Activated naive CD4-positive, alpha-beta T cell treated with anti-CD3 and anti-CD28 coated beads for 36 hours (primary cell): ENCODE measurements at regions of chr1 and their contacts with region 1.

Region 1: DNA sequence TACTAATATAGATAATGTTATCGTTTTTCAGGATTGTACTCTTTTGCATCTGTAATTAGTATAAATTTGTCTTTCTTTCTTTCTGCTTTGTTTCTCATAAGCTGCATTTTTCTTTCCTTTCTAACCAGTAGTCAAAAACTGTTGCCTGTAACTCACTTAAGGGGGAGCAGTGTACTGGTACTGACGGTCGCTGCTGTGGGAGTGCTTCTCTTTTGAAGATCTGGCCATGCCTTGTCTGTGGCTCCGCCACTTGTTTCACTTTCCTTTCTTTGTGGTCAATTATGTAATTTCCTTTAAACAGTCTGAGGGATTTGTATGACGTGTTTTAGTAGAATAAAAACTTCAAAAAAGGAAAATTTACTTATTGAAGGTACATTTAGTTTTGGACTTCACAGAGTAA is 37.0 kb downstream of the MIA3 start:
- DNase-seq: peak; percentile 81
- H3K4me3 Mint-ChIP-seq: peak overlapping the region; percentile 44
- H3K27ac Mint-ChIP-seq: peak overlapping the region; percentile 90
- H3K4me1 Mint-ChIP-seq: peaks cover 62% of the 10 kb centered on the region
- H3K27me3 Mint-ChIP-seq: no peaks in the 10 kb centered on the region

Region 2: GRCh38 chr1:222561656-222562055 is 93.2 kb before region 1 on chr1:
- CTCF ChIA-PET with region 1: no interaction called
- intact Hi-C with region 1: no loop called
- DNase-seq: no peak
- H3K4me3 Mint-ChIP-seq: no peak overlapping the region
- H3K27ac Mint-ChIP-seq: no peak overlapping the region
- H3K4me1 Mint-ChIP-seq: peaks cover 2% of the 10 kb centered on the region
- H3K27me3 Mint-ChIP-seq: no peaks in the 10 kb centered on the region

Region 3: DNA sequence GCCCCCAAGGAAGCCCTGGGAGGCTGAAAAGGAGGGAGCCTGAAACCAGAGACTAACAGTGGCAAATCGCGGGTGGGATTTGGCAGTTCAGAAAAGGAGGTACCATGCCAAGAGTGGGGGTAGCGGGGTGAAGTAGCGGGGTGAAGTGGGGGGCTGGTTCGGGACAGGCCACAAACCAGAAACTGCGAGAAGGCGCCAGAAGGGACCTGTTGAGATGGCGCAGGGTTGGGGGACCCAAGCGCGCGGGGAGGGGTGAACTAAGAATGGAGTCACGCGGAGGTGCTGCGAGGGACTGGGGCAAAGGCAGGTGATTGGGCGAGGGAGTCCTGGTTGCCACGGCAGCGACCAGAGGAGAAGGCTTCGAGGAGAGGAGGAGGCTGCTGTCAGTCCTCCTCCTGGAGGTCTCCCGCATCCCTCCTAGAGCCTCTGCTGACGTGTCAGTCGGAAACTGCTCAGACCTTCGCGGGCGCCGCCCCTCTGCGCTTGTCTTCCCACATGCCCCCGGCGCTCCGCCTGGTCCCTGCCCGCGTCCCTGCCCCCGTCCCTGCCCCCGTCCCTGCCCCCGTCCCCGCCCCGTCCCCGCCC is 37.4 kb before region 1 on chr1:
- CTCF ChIA-PET with region 1: no interaction called
- intact Hi-C with region 1: loop called (anchors 1 kb)
- DNase-seq: peak; percentile 92
- H3K4me3 Mint-ChIP-seq: peak overlapping the region; percentile 79
- H3K27ac Mint-ChIP-seq: peak overlapping the region; percentile 54
- H3K4me1 Mint-ChIP-seq: peaks cover 32% of the 10 kb centered on the region
- H3K27me3 Mint-ChIP-seq: peaks cover 3% of the 10 kb centered on the region

Region 4: GRCh38 chr1:222643938-222644635 is 10.8 kb before region 1 on chr1:
- CTCF ChIA-PET with region 1: interaction called, 10 read pairs
- intact Hi-C with region 1: loop called (anchors 1 kb)
- DNase-seq: peak; percentile 99
- H3K4me3 Mint-ChIP-seq: peak overlapping the region; percentile 99
- H3K27ac Mint-ChIP-seq: peak overlapping the region; percentile 92
- H3K4me1 Mint-ChIP-seq: peaks cover 32% of the 10 kb centered on the region
- H3K27me3 Mint-ChIP-seq: no peaks in the 10 kb centered on the region

Region 5: GRCh38 chr1:222697826-222698225 is 43.0 kb after region 1 on chr1:
- CTCF ChIA-PET with region 1: no interaction called
- intact Hi-C with region 1: no loop called
- DNase-seq: no peak
- H3K4me3 Mint-ChIP-seq: no peak overlapping the region
- H3K27ac Mint-ChIP-seq: no peak overlapping the region
- H3K4me1 Mint-ChIP-seq: peaks cover 14% of the 10 kb centered on the region
- H3K27me3 Mint-ChIP-seq: no peaks in the 10 kb centered on the region

Region 6: GRCh38 chr1:222814536-222815439 is 159.9 kb after region 1 on chr1 and contains the start of gene DISP1:
- CTCF ChIA-PET with region 1: no interaction called
- intact Hi-C with region 1: loop called (anchors 5 kb)
- DNase-seq: peak; percentile 85
- H3K4me3 Mint-ChIP-seq: peak within 1 kb of the TSS; percentile 88
- H3K27ac Mint-ChIP-seq: peak within 1 kb of the TSS; percentile 82
- H3K4me1 Mint-ChIP-seq: peaks cover 21% of the 10 kb centered on the region
- H3K27me3 Mint-ChIP-seq: no peaks in the 10 kb centered on the region
- total RNA-seq, gene DISP1: 0.93 to 0.94 TPM

Region 7: GRCh38 chr1:222987674-222988076 is 332.8 kb after region 1 on chr1:
- CTCF ChIA-PET with region 1: no interaction called
- intact Hi-C with region 1: no loop called
- DNase-seq: no peak
- H3K4me3 Mint-ChIP-seq: no peak overlapping the region
- H3K27ac Mint-ChIP-seq: no peak overlapping the region
- H3K4me1 Mint-ChIP-seq: no peaks in the 10 kb centered on the region
- H3K27me3 Mint-ChIP-seq: no peaks in the 10 kb centered on the region

Region 8: GRCh38 chr1:223081181-223081994 is 426.5 kb after region 1 on chr1:
- CTCF ChIA-PET with region 1: no interaction called
- intact Hi-C with region 1: loop called (anchors 1 kb)
- DNase-seq: peak; percentile 81
- H3K4me3 Mint-ChIP-seq: peak overlapping the region; percentile 61
- H3K27ac Mint-ChIP-seq: no peak overlapping the region
- H3K4me1 Mint-ChIP-seq: no peaks in the 10 kb centered on the region
- H3K27me3 Mint-ChIP-seq: no peaks in the 10 kb centered on the region